ENCODE measurements at regions of chr18 and their contacts with region 1.

Region 1: GRCh38 chr18:37385846-37386778 is 179.5 kb downstream of the CELF4 start:
- DNase-seq: no peak
- ATAC-seq: no peak

Region 2: DNA sequence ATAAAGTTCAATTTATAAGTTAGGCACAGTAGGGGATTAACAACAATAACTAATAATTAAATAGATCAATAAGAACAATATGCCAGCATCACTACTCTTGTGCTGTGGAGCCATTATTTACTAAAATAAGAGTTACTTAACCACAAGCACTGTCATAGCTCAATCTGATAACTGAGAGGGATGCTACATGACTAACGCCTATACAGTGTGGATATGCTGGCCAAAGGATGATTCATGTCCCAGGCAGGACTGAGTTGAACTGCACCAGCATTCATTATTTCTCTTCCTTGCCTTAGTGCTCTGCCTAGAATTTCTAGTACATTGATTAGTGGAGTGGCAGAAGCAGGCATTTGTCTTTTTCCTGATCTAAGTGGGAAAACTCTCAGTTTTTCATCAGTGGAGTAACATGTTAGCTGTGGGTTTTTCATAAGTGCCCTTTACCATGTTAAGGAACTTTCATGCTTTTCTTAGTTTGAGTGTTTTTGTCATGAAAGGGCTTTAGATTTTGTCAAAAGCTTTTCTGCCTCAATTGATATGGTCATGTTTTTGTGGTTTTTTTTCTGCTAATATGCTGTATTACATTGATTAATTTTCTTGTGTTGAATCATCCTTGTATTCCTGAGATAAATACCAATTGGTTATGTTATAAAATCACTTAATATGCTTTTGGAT is 535.4 kb before region 1 on chr18:
- intact Hi-C with region 1: no loop called
- DNase-seq: no peak
- ATAC-seq: no peak

Region 3: DNA sequence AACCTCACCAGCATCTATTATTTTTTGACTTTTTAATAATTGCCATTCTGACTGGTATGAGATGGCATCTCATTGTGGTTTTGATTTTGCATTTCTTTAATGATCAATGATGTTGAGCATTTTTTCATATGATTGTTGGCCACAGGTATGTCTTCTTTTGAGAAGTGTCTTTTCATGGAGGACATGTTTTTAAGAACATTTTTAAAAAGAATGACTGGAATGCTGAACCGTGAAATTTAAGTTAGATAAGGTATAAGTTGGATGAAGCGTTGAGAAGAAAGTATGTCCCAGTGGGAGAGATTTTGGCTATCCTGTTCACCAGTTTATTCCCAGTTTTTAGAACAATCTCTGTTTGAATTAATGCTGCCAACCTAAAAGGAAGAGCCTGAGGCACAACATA is 186.4 kb before region 1 on chr18:
- intact Hi-C with region 1: no loop called
- DNase-seq: no peak
- ATAC-seq: no peak

Region 4: DNA sequence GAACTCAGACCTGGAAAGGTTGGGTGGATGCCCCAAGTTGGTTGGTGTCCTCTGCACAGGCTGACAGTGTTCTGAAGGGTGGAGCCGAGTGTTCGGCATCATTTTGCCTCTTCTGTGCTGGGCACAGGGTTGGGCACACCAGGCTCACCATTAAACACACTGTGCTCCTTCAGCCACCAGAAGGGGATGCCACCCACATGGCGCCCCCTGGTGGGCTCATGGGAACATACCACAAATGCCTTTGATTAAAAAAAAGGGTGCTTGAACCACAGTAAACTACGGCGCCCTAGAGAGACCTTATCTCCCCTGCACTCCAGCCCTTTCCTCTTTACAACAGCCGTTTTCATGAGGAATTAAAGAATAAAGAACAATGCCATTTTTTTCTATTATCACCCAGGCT is 90.1 kb after region 1 on chr18:
- intact Hi-C with region 1: loop called (anchors 10 kb)
- DNase-seq: peak; percentile 46
- ATAC-seq: peak; percentile 23

Region 5: DNA sequence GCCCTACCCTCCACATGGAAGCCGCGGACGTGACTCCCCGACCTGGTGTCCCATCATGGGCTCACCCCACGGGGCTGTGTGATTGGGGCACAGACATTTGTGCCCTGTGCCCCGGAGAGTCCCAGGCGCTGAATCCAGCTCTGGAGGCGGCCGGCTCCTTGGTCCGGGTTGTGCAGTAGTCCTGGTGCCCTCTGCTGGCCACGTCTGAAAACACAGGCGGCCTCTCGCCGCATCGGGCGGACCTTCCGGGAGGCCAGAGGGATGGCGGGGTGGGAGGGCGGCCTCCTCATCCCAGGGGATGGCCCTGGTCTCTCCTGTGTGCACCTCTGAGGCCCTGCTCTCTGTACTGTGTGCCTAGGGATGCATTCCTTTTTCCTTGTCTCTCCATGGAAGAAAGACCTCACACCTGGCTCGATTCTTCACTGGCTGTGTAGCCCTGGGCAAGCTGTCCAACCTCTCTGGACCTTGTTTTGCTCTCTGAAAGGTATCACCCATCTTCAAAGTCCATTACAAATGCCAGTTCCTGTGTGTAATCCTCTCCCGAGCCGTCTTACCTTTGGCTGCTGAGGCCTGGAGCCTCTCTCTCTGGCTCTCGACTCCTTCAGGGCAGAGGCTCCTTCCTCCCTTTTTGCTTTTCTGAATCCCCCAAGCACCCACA is 151.9 kb after region 1 on chr18:
- intact Hi-C with region 1: loop called (anchors 5 kb)
- DNase-seq: peak; percentile 86
- ATAC-seq: peak; percentile 90

Measured in left ventricle myocardium superior (tissue), 1 donor.